ENCODE measurements at regions of chr1 and their contacts with region 1.

Region 1: GRCh38 chr1:229730573-229730972 is 104.5 kb downstream of the URB2 start:
- DNase-seq: no peak
- H3K4me3 ChIP-seq: no peak overlapping the region
- H3K27ac ChIP-seq: no peak overlapping the region
- H3K4me1 ChIP-seq: no peaks in the 10 kb centered on the region; a peak in 1 of 7 replicates
- H3K27me3 ChIP-seq: no peaks in the 10 kb centered on the region
- CTCF ChIP-seq: peak; percentile 4 to 7 (median 7); a peak in 2 of 4 replicates
- EP300 ChIP-seq: no peak
- POLR2A ChIP-seq: no peak
- RAD21 ChIP-seq: peak; percentile 16 to 35; a peak in 3 of 4 replicates

Region 2: DNA sequence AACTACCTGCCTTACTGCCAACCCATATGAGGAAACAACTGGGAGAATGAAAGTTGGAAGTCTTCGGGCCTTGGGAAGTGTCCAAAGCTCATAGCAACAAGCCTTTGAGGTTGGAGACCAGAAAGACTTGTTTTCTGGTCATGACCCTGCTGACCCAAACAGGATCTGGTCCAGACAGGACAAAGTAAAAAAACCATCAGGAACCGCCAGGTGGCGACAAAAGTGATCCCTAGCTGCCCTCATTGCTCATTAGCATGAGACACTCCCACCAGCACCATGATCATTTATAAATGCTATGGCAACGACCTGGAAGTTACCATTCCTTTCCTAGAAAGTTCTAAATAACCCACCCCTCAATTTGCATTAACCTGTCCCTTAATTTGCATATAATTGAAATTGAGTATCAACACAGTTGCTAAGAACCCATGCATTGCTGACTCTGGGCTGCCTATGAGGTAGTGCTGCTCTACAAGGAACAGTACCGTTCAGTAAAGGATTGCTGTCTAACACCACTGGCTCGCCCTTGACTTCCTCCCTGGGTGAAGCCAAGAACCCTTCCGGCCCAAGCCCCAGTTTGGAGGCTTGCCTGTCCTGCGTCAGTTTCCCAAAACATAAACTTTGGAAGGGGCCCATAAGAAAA is 15.5 kb before region 1 on chr1:
- CTCF ChIA-PET with region 1: interaction called, 10 read pairs
- POLR2A ChIA-PET with region 1: interaction called, 3 read pairs
- DNase-seq: peak in 1 of 2 experiments; percentile 76
- H3K4me3 ChIP-seq: no peak overlapping the region
- H3K27ac ChIP-seq: no peak overlapping the region
- H3K4me1 ChIP-seq: peaks cover 3 to 12% (median 7%) of the 10 kb centered on the region in 4 experiments; a peak in 6 of 7 replicates
- H3K27me3 ChIP-seq: no peaks in the 10 kb centered on the region
- CTCF ChIP-seq: peak; percentile 8 to 64 (median 30); a peak in 3 of 4 replicates
- EP300 ChIP-seq: no peak
- POLR2A ChIP-seq: no peak
- RAD21 ChIP-seq: peak; percentile 33 to 39; a peak in 3 of 4 replicates